HEK293 (cell line): ENCODE measurements at regions of chr3 and their contacts with region 1.

Region 1: GRCh38 chr3:44729384-44729910 is at the start of gene ZNF501:
- H3K4me3 ChIP-seq: peak within 1 kb of the TSS; percentile 60
- H3K27ac ChIP-seq: no peak within 1 kb of the TSS
- H3K4me1 ChIP-seq: no peaks in the 10 kb centered on the region
- CTCF ChIP-seq: no peak

Region 2: DNA sequence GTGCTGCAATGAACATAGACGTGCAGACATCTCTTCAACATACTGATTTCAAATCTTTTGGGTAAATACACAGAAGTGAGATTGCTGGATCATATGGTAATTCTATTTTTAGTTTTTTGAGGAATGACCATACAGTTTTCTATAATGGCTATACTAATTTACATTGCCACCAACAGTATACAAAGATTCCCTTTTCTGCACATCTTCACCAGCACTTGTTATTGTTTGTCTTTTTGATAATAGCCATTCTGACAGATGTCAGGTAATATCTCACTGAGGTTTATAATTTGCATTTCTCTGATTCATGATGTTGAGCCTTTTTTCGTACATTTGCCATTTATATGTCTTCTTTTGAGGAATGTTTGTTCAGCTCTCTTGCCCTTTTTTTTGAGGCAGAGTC is 457.3 kb before region 1 on chr3:
- CTCF ChIA-PET with region 1: no interaction called
- POLR2A ChIA-PET with region 1: no interaction called
- H3K4me3 ChIP-seq: no peak overlapping the region
- H3K27ac ChIP-seq: no peak overlapping the region
- H3K4me1 ChIP-seq: no peaks in the 10 kb centered on the region
- CTCF ChIP-seq: no peak

Region 3: DNA sequence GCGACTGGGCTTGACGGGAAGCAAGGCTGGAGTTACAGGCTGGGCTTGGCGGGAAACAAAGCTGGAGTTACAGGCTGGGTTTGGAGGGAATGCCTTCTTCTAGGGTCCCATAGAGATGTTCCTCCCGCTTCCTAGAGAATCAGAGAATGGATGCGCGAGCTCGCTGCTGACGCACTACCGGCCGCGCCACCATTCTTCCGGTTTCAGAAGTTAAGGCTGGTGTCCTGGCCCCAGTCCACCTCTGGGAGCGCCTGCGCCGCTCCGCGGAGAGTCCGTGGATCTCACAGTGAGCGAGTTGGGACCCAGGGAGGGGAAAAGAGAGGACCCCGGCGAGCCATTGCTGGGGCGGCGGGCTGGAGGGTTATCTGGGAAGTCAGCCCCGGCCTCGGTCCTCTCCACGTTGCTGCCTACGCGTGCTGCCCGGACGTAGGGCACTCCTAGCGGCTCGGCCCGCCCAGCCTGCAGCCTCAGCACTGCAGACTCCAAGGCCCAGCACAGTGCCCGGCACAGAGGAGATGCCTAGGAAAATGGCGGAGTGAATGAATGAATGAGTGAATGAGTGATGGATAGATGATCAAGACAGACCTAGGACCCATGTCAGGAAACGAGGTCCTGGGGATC is 16.9 kb before region 1 on chr3 and contains the start of gene ZNF502:
- CTCF ChIA-PET with region 1: interaction called, 3 read pairs
- POLR2A ChIA-PET with region 1: interaction called, 26 read pairs
- H3K4me3 ChIP-seq: peak within 1 kb of the TSS; percentile 82
- H3K27ac ChIP-seq: no peak within 1 kb of the TSS
- H3K4me1 ChIP-seq: no peaks in the 10 kb centered on the region
- CTCF ChIP-seq: no peak

Region 4: GRCh38 chr3:44761424-44762169 is 32.1 kb after region 1 on chr3 and contains the starts of genes KIAA1143 and KIF15:
- CTCF ChIA-PET with region 1: no interaction called
- POLR2A ChIA-PET with region 1: interaction called, 11 read pairs
- H3K4me3 ChIP-seq: peak within 1 kb of the TSS; percentile 87
- H3K27ac ChIP-seq: peak within 1 kb of the TSS; percentile 72
- H3K4me1 ChIP-seq: no peaks in the 10 kb centered on the region
- CTCF ChIP-seq: peak; percentile 66; the same call in 1 of the 2 replicates

Region 5: GRCh38 chr3:45092132-45093031 is 362.9 kb after region 1 on chr3:
- CTCF ChIA-PET with region 1: no interaction called
- POLR2A ChIA-PET with region 1: no interaction called
- H3K4me3 ChIP-seq: no peak overlapping the region
- H3K27ac ChIP-seq: no peak overlapping the region
- H3K4me1 ChIP-seq: no peaks in the 10 kb centered on the region
- CTCF ChIP-seq: no peak